ENCODE measurements at regions of chr4 and their contacts with region 1.

Region 1: DNA sequence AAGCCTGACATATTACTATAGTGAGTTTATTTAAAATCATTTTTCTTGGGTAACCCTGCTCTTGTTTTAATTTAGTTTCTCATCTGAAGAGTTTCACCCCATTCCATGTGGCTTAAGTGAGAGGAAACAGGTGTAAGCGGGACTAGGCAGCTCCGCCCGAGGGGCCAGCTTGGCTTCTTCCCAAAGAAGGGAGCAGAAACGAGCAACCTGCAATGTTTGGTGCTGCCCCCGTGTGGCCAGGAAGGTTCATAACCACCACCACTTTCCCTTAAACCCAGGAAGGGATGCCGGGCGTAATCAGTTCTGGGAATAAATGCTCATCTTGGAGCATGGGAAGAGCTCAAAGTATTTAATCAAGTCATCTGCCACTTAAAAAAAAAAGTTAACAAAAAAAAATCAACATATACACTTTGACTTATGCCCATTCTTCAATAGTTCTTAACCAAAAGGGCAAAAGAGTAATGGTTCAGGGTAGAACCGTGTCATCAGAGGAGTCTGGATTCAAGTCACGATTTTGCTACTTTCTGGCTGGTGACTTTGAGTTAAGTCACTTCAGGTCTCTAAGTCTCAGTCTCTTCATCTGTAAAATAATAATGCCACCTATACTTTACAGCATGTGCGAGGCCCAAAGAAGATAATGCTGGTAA is 147.9 kb downstream of the NSUN7 start:
- DNase-seq: peak; percentile 76
- H3K4me3 Mint-ChIP-seq: peak overlapping the region; percentile 52
- H3K27ac Mint-ChIP-seq: no peak overlapping the region
- H3K4me1 Mint-ChIP-seq: peaks cover 4% of the 10 kb centered on the region
- H3K27me3 Mint-ChIP-seq: peaks cover 2% of the 10 kb centered on the region

Region 2: DNA sequence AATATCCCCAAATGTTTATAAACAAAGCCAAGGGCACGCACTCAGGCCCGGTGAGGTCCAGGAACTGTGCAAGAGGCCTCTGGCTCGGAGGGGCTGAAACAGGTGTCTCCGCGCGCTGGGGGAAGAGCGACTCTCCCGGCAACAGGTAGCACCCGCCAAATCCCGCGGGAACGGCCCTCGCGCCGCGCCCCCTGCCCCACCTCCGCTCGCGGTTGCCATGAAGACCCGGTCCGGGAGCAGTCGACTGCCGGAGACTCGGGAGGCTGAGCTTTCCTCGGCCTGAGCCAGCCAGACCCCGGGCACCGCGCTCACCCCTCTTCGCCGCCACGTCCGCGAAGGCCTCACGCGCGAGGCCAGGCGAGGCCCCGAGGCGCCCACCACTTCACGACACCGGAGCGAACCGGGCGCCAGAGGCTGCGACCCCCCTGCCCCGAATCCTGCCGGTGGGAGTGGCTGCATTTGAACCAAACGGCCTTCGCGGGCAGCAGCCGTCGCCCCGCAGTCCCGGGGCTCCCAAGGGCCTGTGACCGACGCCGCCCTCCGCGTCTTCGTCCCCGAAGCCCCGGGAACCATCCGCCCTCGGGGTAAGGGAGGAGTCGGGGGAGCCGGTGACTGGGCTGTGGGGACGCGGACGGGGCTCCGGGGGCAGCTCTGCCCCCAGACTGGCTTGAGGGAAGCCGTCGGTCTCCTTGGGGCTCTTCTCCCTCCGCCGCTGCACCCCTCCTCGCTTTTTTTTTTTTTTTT is 147.8 kb before region 1 on chr4 and contains the start of gene NSUN7:
- CTCF ChIA-PET with region 1: no interaction called
- POLR2A ChIA-PET with region 1: no interaction called
- intact Hi-C with region 1: loop called (anchors 5 kb)
- DNase-seq: peak; percentile 49
- H3K4me3 Mint-ChIP-seq: peak within 1 kb of the TSS; percentile 20
- H3K27ac Mint-ChIP-seq: no peak within 1 kb of the TSS
- H3K4me1 Mint-ChIP-seq: peaks cover 3% of the 10 kb centered on the region
- H3K27me3 Mint-ChIP-seq: peaks cover 33% of the 10 kb centered on the region
- total RNA-seq, gene NSUN7: 0.07 to 0.10 TPM

Region 3: DNA sequence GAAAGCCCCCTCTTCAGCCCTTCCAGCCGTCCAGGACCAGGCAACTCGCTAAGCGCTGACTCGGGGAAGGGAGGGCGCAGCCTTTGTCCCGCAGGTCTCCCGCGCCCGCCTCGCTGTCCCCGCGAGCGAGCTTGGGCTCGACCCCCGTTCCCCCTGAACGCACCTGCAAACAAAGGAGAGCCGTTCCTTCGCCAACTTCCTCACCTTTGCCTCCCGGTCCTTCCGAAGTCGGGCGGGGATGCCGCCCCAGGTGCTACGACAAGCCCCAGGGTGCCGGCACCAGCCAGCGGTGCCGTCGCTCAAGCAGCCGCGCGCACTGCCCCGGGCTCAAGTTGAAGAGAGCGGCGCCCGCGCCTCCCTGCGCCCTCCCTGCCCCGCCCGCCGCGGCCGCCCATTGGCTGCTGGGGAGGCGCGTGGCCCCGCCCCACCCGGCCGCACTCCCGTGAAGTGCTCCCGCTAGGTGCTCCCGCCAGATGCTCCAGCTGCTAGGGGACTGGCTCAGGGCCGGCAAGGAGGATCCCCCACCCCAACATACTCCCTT is 40.8 kb before region 1 on chr4:
- CTCF ChIA-PET with region 1: interaction called, 10 read pairs
- POLR2A ChIA-PET with region 1: no interaction called
- intact Hi-C with region 1: no loop called
- DNase-seq: peak; percentile 58
- H3K4me3 Mint-ChIP-seq: peak overlapping the region; percentile 53
- H3K27ac Mint-ChIP-seq: no peak overlapping the region
- H3K4me1 Mint-ChIP-seq: peaks cover 12% of the 10 kb centered on the region
- H3K27me3 Mint-ChIP-seq: peaks cover 36% of the 10 kb centered on the region

Region 4: GRCh38 chr4:40887288-40888131 is 10.2 kb before region 1 on chr4:
- CTCF ChIA-PET with region 1: interaction called, 27 read pairs
- POLR2A ChIA-PET with region 1: no interaction called
- intact Hi-C with region 1: no loop called
- DNase-seq: peak; percentile 28
- H3K4me3 Mint-ChIP-seq: no peak overlapping the region
- H3K27ac Mint-ChIP-seq: no peak overlapping the region
- H3K4me1 Mint-ChIP-seq: peaks cover 4% of the 10 kb centered on the region
- H3K27me3 Mint-ChIP-seq: peaks cover 14% of the 10 kb centered on the region

Region 5: DNA sequence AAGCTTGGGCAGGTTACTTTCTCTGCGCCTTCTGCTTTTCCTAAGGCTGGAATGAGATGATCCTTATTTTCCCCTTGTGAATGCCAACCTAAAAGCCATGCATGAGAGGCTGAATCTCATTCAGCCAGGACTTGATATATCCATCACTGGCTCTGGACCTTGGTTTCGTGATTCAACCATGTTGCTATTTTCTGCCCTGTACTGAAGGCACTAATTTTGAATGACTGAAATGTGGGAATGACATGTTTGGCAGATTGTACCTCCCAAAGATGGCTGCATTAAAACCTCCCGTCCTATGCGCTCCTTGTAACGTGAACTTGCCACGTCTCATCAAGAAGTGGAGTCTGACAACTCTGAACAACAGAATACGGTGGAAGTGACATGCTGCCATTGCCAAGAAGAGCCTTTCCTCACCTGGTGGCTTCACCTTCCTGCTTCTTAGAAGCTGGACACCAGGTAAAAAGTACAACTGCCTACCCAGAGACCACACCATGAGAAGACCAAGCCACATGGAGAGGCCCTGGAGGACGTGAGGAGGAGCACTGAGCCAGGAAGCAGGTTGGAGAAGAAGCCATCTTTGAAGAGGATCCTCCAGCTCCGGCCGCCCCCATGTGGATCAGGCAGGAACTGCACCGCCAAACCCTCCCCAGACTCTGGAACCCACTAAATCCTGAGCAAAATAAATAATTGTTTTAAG is 26.6 kb after region 1 on chr4:
- CTCF ChIA-PET with region 1: interaction called, 27 read pairs
- POLR2A ChIA-PET with region 1: no interaction called
- intact Hi-C with region 1: no loop called
- DNase-seq: peak; percentile 87
- H3K4me3 Mint-ChIP-seq: no peak overlapping the region
- H3K27ac Mint-ChIP-seq: peak overlapping the region; percentile 64
- H3K4me1 Mint-ChIP-seq: peaks cover 15% of the 10 kb centered on the region
- H3K27me3 Mint-ChIP-seq: peaks cover 14% of the 10 kb centered on the region

Region 6: GRCh38 chr4:42104521-42104920 is 1206.8 kb after region 1 on chr4:
- CTCF ChIA-PET with region 1: no interaction called
- POLR2A ChIA-PET with region 1: no interaction called
- intact Hi-C with region 1: no loop called
- DNase-seq: no peak
- H3K4me3 Mint-ChIP-seq: no peak overlapping the region
- H3K27ac Mint-ChIP-seq: no peak overlapping the region
- H3K4me1 Mint-ChIP-seq: no peaks in the 10 kb centered on the region
- H3K27me3 Mint-ChIP-seq: peaks cover 6% of the 10 kb centered on the region